Left ventricle myocardium inferior (tissue), 1 donor: ENCODE measurements at regions of chr1 and their contacts with region 1.

Region 1: DNA sequence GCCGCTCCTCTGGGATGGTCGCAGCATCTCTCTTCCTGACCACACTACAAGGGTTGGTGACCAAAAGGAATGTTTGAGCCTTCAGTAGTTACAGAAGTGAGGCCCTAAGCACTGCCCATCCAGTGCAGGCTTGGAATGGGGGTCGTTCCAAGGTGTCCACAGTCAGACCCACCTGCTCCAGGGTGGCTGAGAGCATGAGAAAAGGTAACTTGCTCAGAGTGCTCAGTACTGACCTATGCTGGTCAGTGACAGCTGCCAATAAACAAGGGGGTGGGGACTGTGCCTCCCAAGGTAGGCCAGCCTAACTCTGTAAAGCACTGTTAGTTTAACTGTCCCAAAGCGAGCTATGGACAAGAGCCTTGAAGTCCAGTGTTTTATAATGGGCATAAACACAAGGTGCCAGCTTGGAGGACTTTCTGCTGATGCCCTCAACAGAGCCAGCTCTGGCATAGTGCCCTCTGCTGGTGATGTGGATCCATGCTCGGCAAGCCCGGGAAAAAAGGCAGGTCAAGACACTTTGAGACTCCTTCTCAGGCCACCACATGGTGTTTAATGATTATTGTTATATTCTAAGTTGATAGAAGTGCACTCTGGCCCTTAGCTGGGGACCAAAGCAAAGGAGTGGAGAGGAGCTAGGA is 78.1 kb upstream of the DNAH14 start:
- DNase-seq: peak; percentile 40
- H3K4me3 ChIP-seq: no peak overlapping the region
- H3K27ac ChIP-seq: no peak overlapping the region
- H3K4me1 ChIP-seq: no peaks in the 10 kb centered on the region
- H3K27me3 ChIP-seq: no peaks in the 10 kb centered on the region
- CTCF ChIP-seq: peak; percentile 64

Region 2: DNA sequence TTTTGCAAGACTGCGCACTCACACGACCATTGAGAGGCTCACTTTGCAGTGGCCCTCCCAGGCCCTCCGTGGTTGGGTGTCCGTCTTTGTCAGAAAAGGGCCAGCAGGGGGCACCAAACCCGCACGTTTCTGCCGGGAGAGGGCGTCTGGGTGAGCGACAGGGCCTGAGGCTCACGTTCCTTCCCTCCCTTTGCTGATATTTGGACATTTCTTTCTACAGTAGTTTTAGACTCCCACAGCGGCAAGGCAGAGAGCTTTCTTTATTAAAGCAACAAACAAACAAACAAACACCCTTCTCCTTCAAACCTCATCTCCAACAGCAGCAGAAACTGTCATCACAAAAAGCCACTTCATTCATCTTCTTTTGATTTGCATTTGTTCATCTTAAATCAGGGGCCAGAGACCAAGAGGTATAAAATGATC is 337.5 kb before region 1 on chr1:
- intact Hi-C with region 1: loop called (anchors 5 kb)
- DNase-seq: peak; percentile 82
- H3K4me3 ChIP-seq: no peak overlapping the region
- H3K27ac ChIP-seq: no peak overlapping the region
- H3K4me1 ChIP-seq: peaks cover 6% of the 10 kb centered on the region
- H3K27me3 ChIP-seq: no peaks in the 10 kb centered on the region
- CTCF ChIP-seq: peak; percentile 96

Region 3: GRCh38 chr1:224644553-224645154 is 206.7 kb before region 1 on chr1:
- intact Hi-C with region 1: loop called (anchors 10 kb)
- DNase-seq: no peak
- H3K4me3 ChIP-seq: no peak overlapping the region
- H3K27ac ChIP-seq: no peak overlapping the region
- H3K4me1 ChIP-seq: no peaks in the 10 kb centered on the region
- H3K27me3 ChIP-seq: peaks cover 16% of the 10 kb centered on the region
- CTCF ChIP-seq: peak; percentile 90

Region 4: DNA sequence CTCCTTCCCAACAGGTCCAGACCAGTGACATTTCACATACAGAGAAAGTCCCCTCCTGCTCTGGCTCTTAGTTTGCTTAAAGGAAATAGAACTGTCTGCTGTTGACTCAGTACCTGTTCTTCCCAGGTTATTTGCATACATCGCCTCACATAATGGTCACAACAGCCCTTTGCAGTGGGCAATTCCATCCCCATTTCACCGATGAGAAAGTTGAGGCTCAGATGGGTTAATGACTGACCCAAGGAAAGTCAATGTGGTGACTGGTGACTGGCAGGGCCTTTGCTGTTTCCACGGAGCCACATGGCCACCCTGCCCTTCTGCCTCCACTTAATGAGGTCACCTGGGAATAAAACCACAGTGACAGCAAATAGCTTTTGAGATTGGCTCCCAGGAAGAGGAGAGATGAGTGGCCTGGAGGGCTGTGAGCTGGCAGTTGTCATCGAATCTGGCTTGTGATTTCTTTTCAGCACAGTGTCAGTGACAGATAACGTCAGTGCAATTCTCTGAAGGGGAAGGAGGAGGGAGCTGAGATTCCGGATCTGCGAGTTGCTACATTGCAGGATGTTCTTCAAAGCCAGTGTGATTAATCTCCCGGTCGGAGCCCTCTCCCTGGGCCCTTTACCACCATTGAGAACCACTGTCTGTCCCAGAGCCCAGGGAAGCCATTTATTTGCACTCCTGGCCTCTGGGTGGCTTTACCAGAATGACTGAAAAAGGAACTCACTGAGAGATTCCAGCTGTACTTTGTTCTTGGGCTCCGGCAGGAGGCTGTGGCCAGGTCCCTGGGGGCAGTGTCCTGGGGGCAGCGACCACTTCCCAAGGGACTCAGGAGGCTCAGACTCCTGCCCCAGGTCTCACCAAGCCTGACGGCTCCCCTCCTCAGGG is 118.1 kb before region 1 on chr1:
- intact Hi-C with region 1: no loop called
- DNase-seq: peak; percentile 19
- H3K4me3 ChIP-seq: no peak overlapping the region
- H3K27ac ChIP-seq: peak overlapping the region; percentile 58
- H3K4me1 ChIP-seq: peaks cover 31% of the 10 kb centered on the region
- H3K27me3 ChIP-seq: no peaks in the 10 kb centered on the region
- CTCF ChIP-seq: no peak

Region 5: DNA sequence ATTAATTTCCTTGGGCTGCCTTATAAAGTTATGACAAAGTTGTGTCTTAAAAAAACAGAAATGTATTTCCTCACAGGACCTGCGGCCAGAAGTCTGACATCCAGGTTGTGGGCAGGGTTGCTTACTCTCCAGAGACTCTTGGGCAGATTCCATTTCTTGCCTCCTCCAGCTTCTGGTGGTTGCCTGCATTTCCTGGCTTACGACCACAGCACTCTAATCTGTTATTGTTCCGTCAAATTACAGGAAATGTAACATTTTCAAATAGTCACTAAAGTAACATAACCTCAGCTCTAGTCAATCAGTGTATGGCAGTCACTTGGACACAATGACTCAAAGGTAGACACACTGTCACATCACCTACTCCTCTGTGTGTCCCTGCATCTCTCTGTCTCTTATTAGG is 304.9 kb after region 1 on chr1:
- intact Hi-C with region 1: no loop called
- DNase-seq: no peak
- H3K4me3 ChIP-seq: no peak overlapping the region
- H3K27ac ChIP-seq: no peak overlapping the region
- H3K4me1 ChIP-seq: no peaks in the 10 kb centered on the region
- H3K27me3 ChIP-seq: no peaks in the 10 kb centered on the region
- CTCF ChIP-seq: no peak